HEK293 (cell line): ENCODE measurements at regions of chr12 and their contacts with region 1.

Region 1: GRCh38 chr12:109775172-109775881 is 57.9 kb downstream of the TRPV4 start:
- H3K4me3 ChIP-seq: no peak overlapping the region
- H3K27ac ChIP-seq: no peak overlapping the region
- H3K4me1 ChIP-seq: no peaks in the 10 kb centered on the region
- CTCF ChIP-seq: peak; percentile 60

Region 2: DNA sequence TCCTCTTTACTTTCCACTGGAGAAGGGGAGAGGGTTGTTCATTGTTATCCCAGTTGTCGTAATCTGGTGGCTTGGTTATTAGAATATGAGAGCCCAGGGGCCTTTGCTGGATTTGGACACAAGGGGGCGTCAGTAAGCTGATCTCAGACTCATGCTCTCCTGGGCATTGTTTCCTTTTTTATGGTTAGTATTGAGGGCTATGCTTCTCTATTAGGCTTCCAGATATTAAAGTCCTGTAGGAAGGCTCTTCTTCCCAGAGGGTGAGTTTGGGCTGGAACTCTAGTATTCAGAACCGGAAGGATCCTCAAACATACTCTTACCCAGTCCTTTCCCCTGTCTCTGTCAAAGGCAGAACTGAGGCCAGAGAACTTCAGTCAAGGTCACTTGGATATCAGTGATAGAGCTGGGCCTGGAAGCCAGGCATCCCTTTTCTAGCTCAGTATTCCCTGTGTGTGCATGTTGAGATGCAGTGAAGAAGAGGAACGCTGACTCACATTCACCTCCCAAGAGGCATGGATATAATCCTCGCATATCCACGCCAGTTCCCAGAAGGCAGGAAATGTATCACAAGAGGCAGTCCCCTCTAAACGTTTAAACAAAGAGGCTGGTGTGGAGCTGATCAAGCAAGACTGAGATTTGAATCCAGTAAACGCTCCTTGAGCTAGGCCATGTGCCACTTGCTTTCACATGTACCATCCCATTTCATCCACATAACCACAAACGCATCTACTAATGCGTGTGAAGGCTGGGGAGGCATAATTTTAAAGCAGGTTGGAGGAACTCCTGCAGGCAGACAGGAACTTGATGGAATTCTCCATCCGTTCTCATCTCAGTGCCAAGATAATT is 256.3 kb before region 1 on chr12:
- CTCF ChIA-PET with region 1: interaction called, 89 read pairs
- POLR2A ChIA-PET with region 1: no interaction called
- H3K4me3 ChIP-seq: no peak overlapping the region
- H3K27ac ChIP-seq: no peak overlapping the region
- H3K4me1 ChIP-seq: no peaks in the 10 kb centered on the region
- CTCF ChIP-seq: peak; percentile 59; the same call in 1 of the 2 replicates

Region 3: DNA sequence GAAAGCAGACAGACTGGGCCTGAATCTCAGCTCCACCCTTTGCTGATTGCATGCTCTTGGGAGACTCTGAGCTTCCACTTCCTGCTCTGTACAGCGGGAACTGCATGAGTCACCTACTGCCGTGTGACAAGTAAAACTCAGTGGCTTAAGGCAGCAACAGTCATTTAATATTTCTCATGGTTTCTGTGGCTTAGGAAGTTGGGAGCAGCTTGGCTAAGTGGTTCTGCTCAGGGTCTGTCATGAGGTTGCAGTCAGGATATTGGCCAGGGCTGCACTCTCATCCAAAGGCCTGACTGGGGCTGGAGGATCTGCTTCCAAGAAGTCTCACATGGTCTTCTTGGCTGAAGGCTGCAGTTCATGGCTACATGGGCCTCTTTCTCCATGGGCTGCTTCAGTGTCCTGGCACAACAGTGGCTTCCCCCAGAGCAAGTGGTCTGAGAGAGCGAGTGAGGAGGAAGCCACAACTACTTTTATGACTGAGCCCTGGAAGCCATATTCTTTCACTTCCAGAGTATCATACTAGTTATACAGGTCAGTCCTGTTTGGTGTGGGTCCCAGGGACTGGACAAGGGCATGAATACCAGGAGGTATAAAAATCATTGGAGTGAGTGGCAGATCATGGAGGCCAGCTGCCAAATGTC is 12.0 kb before region 1 on chr12:
- CTCF ChIA-PET with region 1: interaction called, 30 read pairs
- POLR2A ChIA-PET with region 1: no interaction called
- H3K4me3 ChIP-seq: no peak overlapping the region
- H3K27ac ChIP-seq: no peak overlapping the region
- H3K4me1 ChIP-seq: no peaks in the 10 kb centered on the region
- CTCF ChIP-seq: no peak